Right lobe of liver (tissue), 6 donors: ENCODE measurements at regions of chr16 and their contacts with region 1.

Region 1: GRCh38 chr16:19167710-19168370 is at the start of gene SYT17:
- DNase-seq: peak; percentile 81 to 85 (median 83)
- ATAC-seq: peak; percentile 90 to 96 (median 95)
- H3K4me3 ChIP-seq: peak within 1 kb of the TSS; percentile 58 to 85 (median 83)
- H3K27ac ChIP-seq: peak within 1 kb of the TSS; percentile 19 to 62 (median 33)
- H3K4me1 ChIP-seq: no peaks in the 10 kb centered on the region
- H3K27me3 ChIP-seq: no peaks in the 10 kb centered on the region
- CTCF ChIP-seq: peak in 3 of 4 donors; percentile 88 to 91 (median 90)
- POLR2A ChIP-seq: no peak
- total RNA-seq, gene SYT17: 8.2 to 14.1 (median 9.5) TPM

Region 2: GRCh38 chr16:19375561-19376158 is 207.8 kb after region 1 on chr16:
- intact Hi-C with region 1: loop called (anchors 5 kb)
- DNase-seq: peak in 1 of 3 donors; percentile 50
- ATAC-seq: peak; percentile 75 to 83 (median 80)
- H3K4me3 ChIP-seq: no peak overlapping the region
- H3K27ac ChIP-seq: no peak overlapping the region
- H3K4me1 ChIP-seq: peaks cover 0 to 13% (median 0%) of the 10 kb centered on the region in 4 donors
- H3K27me3 ChIP-seq: no peaks in the 10 kb centered on the region
- CTCF ChIP-seq: peak; percentile 87 to 94 (median 92)
- POLR2A ChIP-seq: no peak